Transverse colon (tissue), 4 donors: ENCODE measurements at regions of chr2 and their contacts with region 1.

Region 1: DNA sequence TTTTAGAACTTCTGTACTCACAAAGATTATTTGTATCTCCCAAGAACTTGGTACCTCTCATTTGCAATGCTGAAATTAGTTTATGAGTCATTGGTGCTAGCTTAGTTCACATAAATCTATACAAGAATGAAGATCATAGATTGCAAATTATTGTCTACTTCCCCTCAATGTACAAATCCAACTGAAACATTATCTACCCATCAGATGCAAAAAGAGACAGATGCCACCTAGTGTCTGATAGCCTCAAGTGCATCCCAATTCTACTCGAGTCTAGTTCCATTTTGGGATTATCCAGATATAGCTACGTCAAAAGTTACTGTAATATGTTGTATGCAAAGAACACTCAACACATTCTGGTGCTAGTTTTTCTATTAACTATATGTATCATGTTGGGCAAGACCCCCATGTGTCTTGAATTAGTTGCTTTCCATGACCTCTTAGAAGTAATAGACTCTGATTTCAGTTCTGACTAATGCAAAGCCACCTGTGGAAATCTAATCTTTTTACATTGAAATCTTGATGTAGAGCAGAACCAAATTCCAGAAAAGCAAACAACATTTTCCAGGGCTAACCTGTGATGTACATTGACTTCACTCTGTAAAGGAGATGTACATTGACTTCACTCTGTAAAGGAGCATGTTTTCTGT is 210.0 kb downstream of the RBM43 start:
- DNase-seq: peak; percentile 11
- H3K4me3 ChIP-seq: no peak overlapping the region
- H3K27ac ChIP-seq: no peak overlapping the region
- H3K4me1 ChIP-seq: peaks cover 0 to 4% (median 0%) of the 10 kb centered on the region in 4 donors
- H3K27me3 ChIP-seq: no peaks in the 10 kb centered on the region
- CTCF ChIP-seq: peak; percentile 55 to 76 (median 74)
- EP300 ChIP-seq: no peak
- POLR2A ChIP-seq: no peak

Region 2: GRCh38 chr2:149611099-149611820 is 1440.4 kb before region 1 on chr2:
- in situ Hi-C with region 1: loop called in 2 of 4 experiments (anchors 10 to 25 kb)
- intact Hi-C with region 1: no loop called
- DNase-seq: no peak
- H3K4me3 ChIP-seq: no peak overlapping the region
- H3K27ac ChIP-seq: no peak overlapping the region
- H3K4me1 ChIP-seq: peaks cover 0 to 7% (median 0%) of the 10 kb centered on the region in 4 donors
- H3K27me3 ChIP-seq: no peaks in the 10 kb centered on the region
- CTCF ChIP-seq: no peak
- EP300 ChIP-seq: no peak
- POLR2A ChIP-seq: no peak

Region 3: DNA sequence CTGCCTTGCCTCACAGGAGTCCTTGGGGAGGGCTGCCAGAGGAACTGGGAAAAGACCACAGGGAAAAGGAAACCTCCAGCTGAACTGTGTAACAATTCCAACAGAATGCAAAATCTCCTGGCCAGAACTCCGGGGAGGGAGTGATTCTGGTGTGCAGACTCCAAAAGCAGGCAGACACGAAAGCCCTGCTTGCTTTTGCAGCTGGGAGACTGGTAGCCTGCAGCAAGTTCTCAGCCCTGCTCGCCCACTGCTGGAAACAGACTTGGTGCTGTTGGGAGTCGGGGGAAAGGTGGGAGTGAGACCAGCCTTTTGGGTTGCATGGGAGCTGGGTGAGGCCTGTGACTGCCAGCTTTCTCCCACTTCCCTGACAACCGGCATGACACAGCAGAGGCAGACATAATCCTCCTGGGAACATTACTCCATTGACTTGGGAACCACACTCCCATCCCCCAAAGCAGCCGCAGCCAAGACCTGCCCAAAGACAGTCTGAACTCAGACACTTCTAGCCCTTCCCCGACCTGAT is 263.7 kb after region 1 on chr2:
- in situ Hi-C with region 1: no loop called
- intact Hi-C with region 1: no loop called
- DNase-seq: no peak
- H3K4me3 ChIP-seq: no peak overlapping the region
- H3K27ac ChIP-seq: peak overlapping the region in 2 of 4 donors; percentile 16 to 38
- H3K4me1 ChIP-seq: no peaks in the 10 kb centered on the region
- H3K27me3 ChIP-seq: no peaks in the 10 kb centered on the region
- CTCF ChIP-seq: no peak
- EP300 ChIP-seq: no peak
- POLR2A ChIP-seq: no peak